ENCODE measurements at regions of chr12 and their contacts with region 1.

Region 1: GRCh38 chr12:116708826-116709756 is 28.8 kb downstream of the SPRING1 start:
- DNase-seq: peak; percentile 74
- H3K4me3 ChIP-seq: peak overlapping the region; percentile 26 to 45
- H3K27ac ChIP-seq: no peak overlapping the region
- H3K4me1 ChIP-seq: peaks cover 3 to 24% of the 10 kb centered on the region in 2 experiments; a peak in 2 of 4 replicates
- H3K27me3 ChIP-seq: no peaks in the 10 kb centered on the region
- CTCF ChIP-seq: peak; percentile 71
- EP300 ChIP-seq: no peak; a peak in 1 of 4 replicates
- RAD21 ChIP-seq: peak; percentile 89

Region 2: GRCh38 chr12:115998119-115998633 is 710.9 kb before region 1 on chr12:
- CTCF ChIA-PET with region 1: interaction called, 20 read pairs
- POLR2A ChIA-PET with region 1: no interaction called
- DNase-seq: peak; percentile 27
- H3K4me3 ChIP-seq: peak overlapping the region in 1 of 2 experiments; percentile 20; a peak in 1 of 4 replicates
- H3K27ac ChIP-seq: peak overlapping the region in 1 of 2 experiments; percentile 20; a peak in 2 of 4 replicates
- H3K4me1 ChIP-seq: 0 out of 4 replicates have a peak, but pooled peaks cover 0 to 5% of the 10 kb centered on the region in 2 experiments
- H3K27me3 ChIP-seq: no peaks in the 10 kb centered on the region
- CTCF ChIP-seq: peak; percentile 89
- EP300 ChIP-seq: no peak
- RAD21 ChIP-seq: peak; percentile 75

Region 3: GRCh38 chr12:116015525-116015924 is 693.6 kb before region 1 on chr12:
- CTCF ChIA-PET with region 1: interaction called, 13 read pairs
- POLR2A ChIA-PET with region 1: no interaction called
- DNase-seq: peak; percentile 15
- H3K4me3 ChIP-seq: no peak overlapping the region
- H3K27ac ChIP-seq: no peak overlapping the region
- H3K4me1 ChIP-seq: no peaks in the 10 kb centered on the region; a peak in 1 of 4 replicates
- H3K27me3 ChIP-seq: no peaks in the 10 kb centered on the region
- CTCF ChIP-seq: peak; percentile 70
- EP300 ChIP-seq: no peak
- RAD21 ChIP-seq: peak; percentile 83

Region 4: DNA sequence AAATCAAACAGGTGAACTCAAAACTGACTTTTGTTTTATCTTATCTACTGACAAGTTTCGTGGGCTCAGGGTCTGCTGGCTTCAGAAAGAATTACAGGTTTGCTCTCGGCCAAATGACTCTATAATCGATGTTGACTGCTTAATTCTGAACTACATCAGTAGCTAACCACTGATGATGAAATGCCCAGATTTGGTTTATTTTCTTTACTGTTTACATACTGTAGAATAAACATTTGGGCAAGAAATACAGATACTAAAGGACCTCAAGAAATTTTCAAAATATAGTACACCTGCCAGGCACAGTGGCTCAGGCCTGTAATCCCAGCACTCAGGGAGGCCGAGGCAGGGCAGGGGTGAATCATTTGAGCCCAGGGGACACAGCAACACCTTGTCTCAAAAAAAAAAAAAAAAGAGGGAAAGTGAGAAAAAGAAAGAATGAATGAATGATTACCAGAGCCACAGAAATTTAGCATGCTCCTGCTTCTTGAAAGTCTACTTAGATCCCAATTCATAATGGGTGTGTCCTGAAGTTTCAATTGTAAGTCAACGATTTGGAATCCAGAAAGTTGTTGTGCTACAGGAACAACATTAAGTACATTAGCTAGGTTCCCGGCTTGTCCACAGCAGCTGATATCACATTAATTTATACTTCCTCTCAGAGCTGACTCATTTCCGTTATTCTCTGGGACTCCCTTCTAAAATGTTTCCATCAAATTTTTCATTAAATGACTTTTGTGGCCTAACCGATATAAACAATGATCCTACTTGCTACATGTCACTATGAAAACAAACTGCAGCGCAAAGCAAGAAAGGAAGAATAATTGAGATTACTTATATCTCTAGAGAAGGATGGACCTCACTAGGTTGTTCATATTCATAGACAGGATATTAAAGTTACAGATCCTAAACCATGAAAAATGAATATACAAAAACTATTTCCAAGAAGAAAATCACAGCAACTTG is 565.9 kb before region 1 on chr12:
- CTCF ChIA-PET with region 1: interaction called, 21 read pairs
- POLR2A ChIA-PET with region 1: no interaction called
- DNase-seq: no peak
- H3K4me3 ChIP-seq: peak overlapping the region in 1 of 2 experiments; percentile 20; a peak in 1 of 4 replicates
- H3K27ac ChIP-seq: peak overlapping the region; percentile 56 to 95; a peak in 3 of 4 replicates
- H3K4me1 ChIP-seq: peaks cover 26 to 44% of the 10 kb centered on the region in 2 experiments; a peak in 3 of 4 replicates
- H3K27me3 ChIP-seq: no peaks in the 10 kb centered on the region
- CTCF ChIP-seq: no peak
- EP300 ChIP-seq: peak in 1 of 2 experiments; percentile 82; a peak in 1 of 4 replicates
- RAD21 ChIP-seq: no peak

Region 5: DNA sequence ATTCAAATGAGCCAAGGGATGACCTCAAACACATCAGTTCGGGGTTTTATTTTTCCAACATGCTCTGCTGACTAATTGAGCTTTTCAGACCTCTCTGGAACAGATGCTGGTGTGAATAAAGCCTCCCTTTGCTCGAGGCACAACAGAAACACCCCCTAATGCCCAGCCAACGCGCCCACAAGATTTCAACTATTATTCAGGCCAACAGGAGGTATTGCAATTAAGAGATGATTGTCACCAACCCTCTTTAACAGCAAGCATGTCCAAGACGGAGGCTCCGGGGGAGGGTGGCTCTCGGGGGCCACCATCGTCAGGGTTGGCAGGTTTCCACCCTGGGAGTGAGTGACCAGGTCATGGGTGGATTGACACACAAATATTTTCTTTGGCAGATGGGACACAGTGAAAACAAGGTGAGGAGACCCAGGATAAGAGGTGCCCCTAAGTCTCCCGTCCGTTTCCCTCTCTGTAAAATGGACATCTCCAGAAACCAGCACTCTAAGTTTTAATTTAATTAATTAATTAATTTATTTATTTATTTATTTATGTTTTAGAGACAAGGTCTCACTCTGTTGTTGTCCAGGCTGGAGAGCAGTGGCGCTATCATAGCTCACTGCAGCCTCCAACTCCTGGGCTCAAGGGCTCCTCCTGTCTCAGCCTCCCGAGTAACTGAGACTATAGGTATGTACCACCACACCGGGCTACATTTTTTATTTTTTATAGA is 93.8 kb before region 1 on chr12:
- CTCF ChIA-PET with region 1: no interaction called
- POLR2A ChIA-PET with region 1: no interaction called
- DNase-seq: no peak
- H3K4me3 ChIP-seq: no peak overlapping the region
- H3K27ac ChIP-seq: no peak overlapping the region
- H3K4me1 ChIP-seq: no peaks in the 10 kb centered on the region; a peak in 1 of 4 replicates
- H3K27me3 ChIP-seq: peaks cover 4% of the 10 kb centered on the region; the same call in 1 of the 2 replicates
- CTCF ChIP-seq: no peak
- EP300 ChIP-seq: no peak
- RAD21 ChIP-seq: no peak

Region 6: DNA sequence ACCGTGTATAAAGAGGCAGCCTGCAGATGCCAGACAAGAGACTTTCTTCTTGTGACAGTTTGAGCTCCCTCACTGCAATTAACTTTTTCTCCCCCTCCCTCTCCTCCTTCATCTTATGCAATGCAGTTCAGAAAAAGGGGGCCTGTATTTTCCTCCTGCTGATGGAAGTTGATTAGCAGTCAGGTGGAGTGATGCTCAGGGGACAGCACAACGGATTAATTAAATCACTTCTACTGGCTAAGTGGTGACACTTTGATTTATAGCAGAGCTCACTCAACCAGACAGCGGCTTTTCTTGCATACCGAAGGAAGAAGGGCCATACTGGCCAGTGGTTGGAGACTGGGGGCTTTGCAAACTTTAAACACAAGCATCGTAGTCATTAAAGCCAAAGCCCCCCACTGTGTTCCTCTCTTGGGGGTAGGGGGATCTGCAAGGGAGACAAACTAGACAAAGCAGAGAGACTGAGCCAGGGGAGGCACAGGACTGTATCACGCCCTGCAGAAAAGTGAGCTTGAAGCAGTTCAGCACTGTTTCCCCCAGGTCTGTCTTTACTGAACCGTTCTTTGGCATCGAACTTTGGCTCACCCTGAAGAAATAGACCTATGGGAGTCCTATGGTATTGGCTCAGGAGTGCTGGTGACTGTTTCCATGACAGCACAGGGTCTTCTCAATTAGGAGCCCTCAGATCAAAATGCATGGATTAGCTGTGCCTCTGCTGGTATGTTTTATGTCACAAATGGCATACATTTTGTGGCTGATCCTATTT is 18.9 kb before region 1 on chr12:
- CTCF ChIA-PET with region 1: interaction called, 48 read pairs
- POLR2A ChIA-PET with region 1: no interaction called
- DNase-seq: peak; percentile 43
- H3K4me3 ChIP-seq: no peak overlapping the region
- H3K27ac ChIP-seq: no peak overlapping the region
- H3K4me1 ChIP-seq: peaks cover 0 to 22% of the 10 kb centered on the region in 2 experiments; a peak in 3 of 4 replicates
- H3K27me3 ChIP-seq: peaks cover 6% of the 10 kb centered on the region; the same call in 1 of the 2 replicates
- CTCF ChIP-seq: no peak
- EP300 ChIP-seq: no peak
- RAD21 ChIP-seq: no peak

Region 7: GRCh38 chr12:116697305-116697704 is 11.8 kb before region 1 on chr12:
- CTCF ChIA-PET with region 1: interaction called, 48 read pairs
- POLR2A ChIA-PET with region 1: interaction called, 3 read pairs
- DNase-seq: peak; percentile 55
- H3K4me3 ChIP-seq: no peak overlapping the region
- H3K27ac ChIP-seq: no peak overlapping the region
- H3K4me1 ChIP-seq: peaks cover 0 to 18% of the 10 kb centered on the region in 2 experiments; a peak in 2 of 4 replicates
- H3K27me3 ChIP-seq: peaks cover 6% of the 10 kb centered on the region; the same call in 1 of the 2 replicates
- CTCF ChIP-seq: peak; percentile 42; the same call in 1 of the 2 replicates
- EP300 ChIP-seq: no peak
- RAD21 ChIP-seq: peak; percentile 69